ENCODE measurements at regions of chr3 and their contacts with region 1.

Region 1: GRCh38 chr3:25455441-25456132 is 27.5 kb downstream of the RARB start:
- DNase-seq: no peak
- H3K4me3 Mint-ChIP-seq: peak overlapping the region; percentile 56
- H3K27ac Mint-ChIP-seq: peak overlapping the region; percentile 83
- H3K4me1 Mint-ChIP-seq: peaks cover 75% of the 10 kb centered on the region
- H3K27me3 Mint-ChIP-seq: no peaks in the 10 kb centered on the region
- CTCF ChIP-seq: no peak

Region 2: GRCh38 chr3:24494618-24495325 is 960.8 kb before region 1 on chr3 and contains the start of gene THRB:
- CTCF ChIA-PET with region 1: no interaction called
- intact Hi-C with region 1: no loop called
- DNase-seq: peak; percentile 83
- H3K4me3 Mint-ChIP-seq: peak within 1 kb of the TSS; percentile 97
- H3K27ac Mint-ChIP-seq: peak within 1 kb of the TSS; percentile 90
- H3K4me1 Mint-ChIP-seq: peaks cover 34% of the 10 kb centered on the region
- H3K27me3 Mint-ChIP-seq: no peaks in the 10 kb centered on the region
- CTCF ChIP-seq: peak; percentile 20
- total RNA-seq, gene THRB: 13.5 and 15.5 TPM in 2 replicates

Region 3: DNA sequence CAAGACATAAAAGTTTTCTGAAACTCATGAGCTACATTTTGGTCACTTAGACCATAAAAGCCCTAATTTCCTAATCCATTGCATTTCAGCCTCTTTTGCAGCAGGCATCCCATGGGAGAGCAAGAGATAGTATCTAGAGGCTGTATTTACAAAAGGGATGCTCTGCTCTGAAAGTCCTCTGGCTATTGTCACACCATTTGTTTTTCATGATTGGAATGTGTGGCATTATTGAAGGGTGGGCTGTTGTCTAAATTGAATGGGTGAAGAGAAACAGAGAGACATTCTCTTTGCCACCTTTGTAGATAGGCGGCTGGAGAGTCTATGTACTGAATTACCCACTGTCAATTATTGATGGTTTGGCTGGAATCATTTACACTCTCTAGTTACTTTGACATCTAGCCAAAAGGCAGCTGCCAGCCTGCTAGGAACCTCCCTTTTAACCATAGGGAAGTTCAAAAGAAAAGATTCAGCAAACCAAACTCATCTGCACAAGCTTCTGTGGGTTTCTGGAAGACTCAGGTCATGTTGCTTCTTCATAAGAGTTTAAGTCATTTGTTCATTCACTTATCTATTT is 117.3 kb before region 1 on chr3:
- CTCF ChIA-PET with region 1: no interaction called
- intact Hi-C with region 1: no loop called
- DNase-seq: no peak
- H3K4me3 Mint-ChIP-seq: no peak overlapping the region
- H3K27ac Mint-ChIP-seq: no peak overlapping the region
- H3K4me1 Mint-ChIP-seq: peaks cover 8% of the 10 kb centered on the region
- H3K27me3 Mint-ChIP-seq: no peaks in the 10 kb centered on the region
- CTCF ChIP-seq: no peak

Region 4: DNA sequence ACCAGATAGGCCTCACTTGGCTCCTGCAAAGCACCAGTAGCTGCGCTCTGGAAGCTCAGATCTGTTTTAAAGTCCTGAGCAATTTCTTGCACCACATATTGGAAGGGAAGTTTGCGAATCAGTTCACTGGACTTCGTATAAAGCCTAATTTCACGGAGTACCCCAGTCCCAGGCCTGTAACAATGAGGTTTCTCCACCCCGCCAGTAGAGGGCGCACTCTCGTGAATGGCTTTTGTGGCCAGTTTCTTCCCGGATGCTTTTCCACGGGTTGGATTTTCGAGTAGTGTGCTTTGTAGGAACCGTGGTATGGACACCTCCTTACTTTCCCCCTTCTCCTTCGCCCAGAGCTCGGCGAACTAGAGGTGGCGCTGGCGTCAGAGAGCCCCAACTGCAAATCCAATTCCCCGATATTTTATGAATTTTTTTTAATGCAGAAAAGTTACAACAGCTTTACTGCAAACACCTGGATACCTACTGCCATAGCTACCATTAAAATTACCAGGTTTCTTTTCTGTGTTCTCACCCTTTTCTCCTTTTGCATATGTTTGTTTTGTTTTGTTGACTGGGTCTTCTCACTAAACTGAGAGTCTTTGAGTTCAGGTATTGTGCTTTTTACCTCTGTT is 14.2 kb before region 1 on chr3:
- CTCF ChIA-PET with region 1: interaction called, 13 read pairs
- intact Hi-C with region 1: loop called (anchors 2 kb)
- DNase-seq: peak; percentile 46
- H3K4me3 Mint-ChIP-seq: no peak overlapping the region
- H3K27ac Mint-ChIP-seq: no peak overlapping the region
- H3K4me1 Mint-ChIP-seq: peaks cover 38% of the 10 kb centered on the region
- H3K27me3 Mint-ChIP-seq: no peaks in the 10 kb centered on the region
- CTCF ChIP-seq: peak; percentile 84

Region 5: DNA sequence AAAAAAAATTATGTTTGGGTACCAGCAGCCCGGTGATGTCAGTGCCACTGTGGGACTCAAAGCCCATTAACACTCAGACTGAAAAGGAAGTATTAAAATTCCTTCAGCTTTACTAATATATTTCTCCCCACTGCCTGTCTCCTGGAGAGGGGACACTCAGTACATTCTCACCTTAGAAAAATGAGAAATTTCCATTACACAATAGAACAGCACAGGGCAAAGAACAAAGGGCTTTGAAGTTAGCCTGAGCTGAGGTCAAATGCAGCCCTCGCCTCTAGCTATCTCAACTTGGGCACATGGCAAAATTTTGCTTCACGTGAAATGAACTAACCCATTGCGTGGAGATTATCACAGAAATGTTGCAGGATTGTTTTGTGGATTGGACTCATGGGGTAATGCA is 53.3 kb after region 1 on chr3:
- CTCF ChIA-PET with region 1: no interaction called
- intact Hi-C with region 1: no loop called
- DNase-seq: no peak
- H3K4me3 Mint-ChIP-seq: no peak overlapping the region
- H3K27ac Mint-ChIP-seq: no peak overlapping the region
- H3K4me1 Mint-ChIP-seq: peaks cover 8% of the 10 kb centered on the region
- H3K27me3 Mint-ChIP-seq: no peaks in the 10 kb centered on the region
- CTCF ChIP-seq: no peak

Region 6: GRCh38 chr3:25664810-25665314 is 209.3 kb after region 1 on chr3 and contains the start of gene TOP2B:
- CTCF ChIA-PET with region 1: no interaction called
- intact Hi-C with region 1: no loop called
- DNase-seq: peak; percentile 94
- H3K4me3 Mint-ChIP-seq: peak within 1 kb of the TSS; percentile 98
- H3K27ac Mint-ChIP-seq: peak within 1 kb of the TSS; percentile 99
- H3K4me1 Mint-ChIP-seq: peaks cover 35% of the 10 kb centered on the region
- H3K27me3 Mint-ChIP-seq: no peaks in the 10 kb centered on the region
- CTCF ChIP-seq: no peak
- total RNA-seq, gene TOP2B: 99.9 and 117 TPM in 2 replicates

Measured in Calu3 (cell line).